ENCODE measurements at regions of chr2 and their contacts with region 1.

Region 1: GRCh38 chr2:234500394-234501006 is 3.6 kb upstream of the ARL4C start:
- DNase-seq: peak; percentile 86
- ATAC-seq: peak; percentile 52
- H3K4me3 Mint-ChIP-seq: no peak overlapping the region
- H3K27ac Mint-ChIP-seq: peak overlapping the region; percentile 23
- H3K4me1 Mint-ChIP-seq: peaks cover 31% of the 10 kb centered on the region
- H3K27me3 Mint-ChIP-seq: peaks cover 13% of the 10 kb centered on the region

Region 2: DNA sequence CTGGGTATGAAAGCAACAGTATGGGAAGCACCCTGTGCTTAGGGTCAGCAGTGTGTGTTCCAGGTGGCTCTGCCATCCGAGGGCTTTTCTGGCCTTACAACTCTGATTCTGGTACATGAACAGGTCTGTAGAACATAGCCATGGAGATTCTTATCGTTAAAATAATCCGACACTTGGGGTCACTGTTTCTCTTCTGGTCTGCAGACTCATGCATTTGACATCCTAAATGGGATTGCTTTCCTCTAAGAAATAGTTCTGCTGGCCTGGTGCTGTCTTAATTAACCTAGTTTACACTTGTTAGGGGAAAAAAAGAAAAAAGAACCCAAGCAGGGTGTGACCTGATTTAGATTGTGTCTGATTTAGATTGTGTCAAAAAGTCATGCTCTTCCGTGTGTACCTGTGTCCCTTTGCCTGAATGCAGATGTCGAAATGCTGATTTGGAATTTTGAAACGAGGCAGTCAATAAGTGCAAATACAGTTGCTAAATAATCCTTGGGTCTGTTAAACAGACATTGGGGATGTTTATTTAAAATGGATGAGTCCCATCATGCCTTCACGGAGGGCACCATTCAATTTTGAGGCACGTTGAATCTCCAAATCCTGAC is 523.7 kb before region 1 on chr2:
- CTCF ChIA-PET with region 1: interaction called, 10 read pairs
- DNase-seq: no peak
- ATAC-seq: peak; percentile 71
- H3K4me3 Mint-ChIP-seq: no peak overlapping the region
- H3K27ac Mint-ChIP-seq: no peak overlapping the region
- H3K4me1 Mint-ChIP-seq: peaks cover 37% of the 10 kb centered on the region
- H3K27me3 Mint-ChIP-seq: no peaks in the 10 kb centered on the region

Region 3: GRCh38 chr2:233990261-233990798 is 510.2 kb before region 1 on chr2:
- CTCF ChIA-PET with region 1: interaction called, 10 read pairs
- DNase-seq: peak; percentile 95
- ATAC-seq: peak; percentile 82
- H3K4me3 Mint-ChIP-seq: peak overlapping the region; percentile 44
- H3K27ac Mint-ChIP-seq: peak overlapping the region; percentile 54
- H3K4me1 Mint-ChIP-seq: peaks cover 43% of the 10 kb centered on the region
- H3K27me3 Mint-ChIP-seq: peaks cover 13% of the 10 kb centered on the region

Measured in activated CD8-positive, alpha-beta memory T cell treated with anti-CD3 and anti-CD28 coated beads, Interleukin-2, amount 10 ng/mL, durations not matched to agents 7 days and 5 days (primary cell).